ENCODE measurements at regions of chr6 and their contacts with region 1.

Region 1: GRCh38 chr6:98779618-98780017 is 54.8 kb upstream of the POU3F2 start:
- DNase-seq: no peak
- H3K4me3 ChIP-seq: no peak overlapping the region
- CTCF ChIP-seq: no peak
- POLR2A ChIP-seq: no peak

Region 2: DNA sequence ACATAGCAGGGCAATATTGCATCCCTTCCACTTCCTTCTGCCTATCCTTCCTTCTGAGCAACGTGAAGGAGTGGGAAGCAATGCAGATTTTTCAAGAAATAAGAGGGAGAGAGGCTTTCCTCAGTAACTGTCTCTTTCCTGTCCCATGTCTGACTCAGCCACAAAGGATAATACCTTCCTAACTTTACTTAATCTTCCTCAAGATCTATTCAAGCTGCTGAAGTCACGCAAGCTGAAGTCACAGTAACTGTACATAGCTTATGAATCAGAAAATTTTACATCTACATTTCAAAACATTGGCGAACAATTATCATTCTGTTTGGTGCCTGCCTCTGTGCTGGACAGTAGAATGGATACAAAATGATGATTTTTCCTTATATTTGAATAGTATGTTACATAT is 31.7 kb before region 1 on chr6:
- intact Hi-C with region 1: loop called (anchors 1 kb)
- DNase-seq: no peak
- H3K4me3 ChIP-seq: no peak overlapping the region
- CTCF ChIP-seq: no peak
- POLR2A ChIP-seq: no peak

Measured in lower leg skin (tissue), 4 donors.